CD8-positive, alpha-beta T cell (primary cell): ENCODE measurements at regions of chr12 and their contacts with region 1.

Region 1: GRCh38 chr12:10235761-10236631 is 23.3 kb downstream of the GABARAPL1 start:
- DNase-seq: peak in 8 of 9 experiments; percentile 26 to 80 (median 54)
- ATAC-seq: peak; percentile 78
- H3K4me3 ChIP-seq: no peak overlapping the region
- H3K4me3 Mint-ChIP-seq: no peak overlapping the region
- H3K27ac ChIP-seq: peak overlapping the region in 1 of 2 experiments; percentile 56
- H3K27ac Mint-ChIP-seq: peak overlapping the region; percentile 73
- H3K4me1 ChIP-seq: peaks cover 6% of the 10 kb centered on the region
- H3K4me1 Mint-ChIP-seq: peaks cover 18% of the 10 kb centered on the region
- H3K27me3 ChIP-seq: no peaks in the 10 kb centered on the region
- H3K27me3 Mint-ChIP-seq: no peaks in the 10 kb centered on the region
- CTCF ChIP-seq: peak; percentile 90

Region 2: GRCh38 chr12:8483079-8483478 is 1752.9 kb before region 1 on chr12:
- CTCF ChIA-PET with region 1: no interaction called
- POLR2A ChIA-PET with region 1: no interaction called
- intact Hi-C with region 1: no loop called
- DNase-seq: peak in 3 of 9 experiments; percentile 4 to 27 (median 18)
- ATAC-seq: peak; percentile 58
- H3K4me3 ChIP-seq: no peak overlapping the region
- H3K4me3 Mint-ChIP-seq: no peak overlapping the region
- H3K27ac ChIP-seq: no peak overlapping the region
- H3K27ac Mint-ChIP-seq: peak overlapping the region; percentile 86
- H3K4me1 ChIP-seq: peaks cover 8% of the 10 kb centered on the region
- H3K4me1 Mint-ChIP-seq: peaks cover 14% of the 10 kb centered on the region
- H3K27me3 ChIP-seq: peaks cover 0 to 3% of the 10 kb centered on the region in 2 experiments
- H3K27me3 Mint-ChIP-seq: peaks cover 5% of the 10 kb centered on the region
- CTCF ChIP-seq: no peak

Region 3: GRCh38 chr12:9707864-9708808 is 527.9 kb before region 1 on chr12:
- CTCF ChIA-PET with region 1: no interaction called
- POLR2A ChIA-PET with region 1: no interaction called
- intact Hi-C with region 1: no loop called
- DNase-seq: peak; percentile 47 to 88 (median 73)
- ATAC-seq: peak; percentile 89
- H3K4me3 ChIP-seq: peak overlapping the region; percentile 5 to 21
- H3K4me3 Mint-ChIP-seq: peak overlapping the region; percentile 73
- H3K27ac ChIP-seq: peak overlapping the region; percentile 19 to 75
- H3K27ac Mint-ChIP-seq: peak overlapping the region; percentile 95
- H3K4me1 ChIP-seq: peaks cover 37% of the 10 kb centered on the region
- H3K4me1 Mint-ChIP-seq: peaks cover 62% of the 10 kb centered on the region
- H3K27me3 ChIP-seq: no peaks in the 10 kb centered on the region
- H3K27me3 Mint-ChIP-seq: no peaks in the 10 kb centered on the region
- CTCF ChIP-seq: peak; percentile 70

Region 4: DNA sequence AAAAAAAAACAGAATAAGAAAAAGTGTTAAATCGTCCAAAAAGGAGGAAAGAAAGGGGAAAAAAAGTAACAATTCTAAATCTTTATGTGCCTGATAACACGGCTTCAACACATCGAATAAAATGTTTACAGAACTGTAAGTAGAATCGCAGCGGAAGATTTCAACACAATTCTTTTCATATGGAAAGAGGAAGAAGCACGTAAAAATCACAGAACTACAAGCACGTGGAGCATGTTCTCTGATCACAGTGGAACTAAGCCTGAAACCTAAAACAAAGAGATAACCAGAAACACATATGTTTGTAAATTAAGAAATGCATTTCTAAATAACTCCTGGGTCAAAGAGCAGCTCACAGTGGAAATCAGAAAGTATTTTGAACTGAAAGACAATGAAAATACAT is 114.7 kb before region 1 on chr12:
- CTCF ChIA-PET with region 1: no interaction called
- POLR2A ChIA-PET with region 1: no interaction called
- intact Hi-C with region 1: no loop called
- DNase-seq: no peak
- ATAC-seq: no peak
- H3K4me3 ChIP-seq: no peak overlapping the region
- H3K4me3 Mint-ChIP-seq: no peak overlapping the region
- H3K27ac ChIP-seq: no peak overlapping the region
- H3K27ac Mint-ChIP-seq: no peak overlapping the region
- H3K4me1 ChIP-seq: no peaks in the 10 kb centered on the region
- H3K4me1 Mint-ChIP-seq: no peaks in the 10 kb centered on the region
- H3K27me3 ChIP-seq: no peaks in the 10 kb centered on the region
- H3K27me3 Mint-ChIP-seq: no peaks in the 10 kb centered on the region
- CTCF ChIP-seq: no peak

Region 5: GRCh38 chr12:10320643-10321042 is 84.6 kb after region 1 on chr12:
- CTCF ChIA-PET with region 1: interaction called, 10 read pairs
- POLR2A ChIA-PET with region 1: no interaction called
- intact Hi-C with region 1: no loop called
- DNase-seq: no peak
- ATAC-seq: no peak
- H3K4me3 ChIP-seq: no peak overlapping the region
- H3K4me3 Mint-ChIP-seq: no peak overlapping the region
- H3K27ac ChIP-seq: peak overlapping the region in 1 of 2 experiments; percentile 45
- H3K27ac Mint-ChIP-seq: peak overlapping the region; percentile 2
- H3K4me1 ChIP-seq: no peaks in the 10 kb centered on the region
- H3K4me1 Mint-ChIP-seq: peaks cover 18% of the 10 kb centered on the region
- H3K27me3 ChIP-seq: no peaks in the 10 kb centered on the region
- H3K27me3 Mint-ChIP-seq: no peaks in the 10 kb centered on the region
- CTCF ChIP-seq: no peak

Region 6: DNA sequence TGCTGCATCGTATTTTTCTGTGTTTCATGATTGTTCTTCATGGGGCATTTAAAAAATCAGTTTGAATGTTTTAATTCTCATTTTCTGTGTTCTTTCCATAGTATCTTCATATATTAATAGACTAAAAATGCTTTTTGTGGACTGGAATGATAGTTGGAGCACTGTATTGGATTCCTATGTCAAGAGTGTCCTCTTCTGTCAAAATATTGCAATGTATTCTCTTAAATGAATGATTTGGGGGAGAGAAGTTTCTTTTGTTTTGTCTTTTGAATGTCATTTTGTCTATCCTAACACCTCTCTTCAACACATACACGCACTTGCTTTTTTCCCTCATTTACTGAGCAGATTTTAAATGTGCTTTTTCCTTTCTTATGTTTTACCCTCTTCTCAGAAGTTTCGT is 265.0 kb after region 1 on chr12:
- CTCF ChIA-PET with region 1: interaction called, 25 read pairs
- POLR2A ChIA-PET with region 1: no interaction called
- intact Hi-C with region 1: loop called (anchors 1 to 2 kb)
- DNase-seq: peak in 2 of 9 experiments; percentile 36 to 59
- ATAC-seq: no peak
- H3K4me3 ChIP-seq: no peak overlapping the region
- H3K4me3 Mint-ChIP-seq: peak overlapping the region; percentile 57
- H3K27ac ChIP-seq: no peak overlapping the region
- H3K27ac Mint-ChIP-seq: peak overlapping the region; percentile 82
- H3K4me1 ChIP-seq: peaks cover 56% of the 10 kb centered on the region
- H3K4me1 Mint-ChIP-seq: peaks cover 51% of the 10 kb centered on the region
- H3K27me3 ChIP-seq: no peaks in the 10 kb centered on the region
- H3K27me3 Mint-ChIP-seq: no peaks in the 10 kb centered on the region
- CTCF ChIP-seq: no peak

Region 7: GRCh38 chr12:10613349-10614055 is 377.5 kb after region 1 on chr12 and contains the start of gene MAGOHB:
- CTCF ChIA-PET with region 1: interaction called, 3 read pairs
- POLR2A ChIA-PET with region 1: no interaction called
- intact Hi-C with region 1: loop called in 1 of 2 experiments (anchors 5 kb)
- DNase-seq: peak; percentile 97 to 100 (median 99)
- ATAC-seq: peak; percentile 90
- H3K4me3 ChIP-seq: peak within 1 kb of the TSS; percentile 74 to 97
- H3K4me3 Mint-ChIP-seq: peak within 1 kb of the TSS; percentile 100
- H3K27ac ChIP-seq: peak within 1 kb of the TSS; percentile 91 to 99
- H3K27ac Mint-ChIP-seq: peak within 1 kb of the TSS; percentile 100
- H3K4me1 ChIP-seq: peaks cover 19% of the 10 kb centered on the region
- H3K4me1 Mint-ChIP-seq: peaks cover 33% of the 10 kb centered on the region
- H3K27me3 ChIP-seq: no peaks in the 10 kb centered on the region
- H3K27me3 Mint-ChIP-seq: no peaks in the 10 kb centered on the region
- CTCF ChIP-seq: no peak
- total RNA-seq, gene MAGOHB: 7.9 to 8.5 TPM

Region 8: GRCh38 chr12:10673660-10674384 is 437.8 kb after region 1 on chr12 and contains the start of gene STYK1:
- CTCF ChIA-PET with region 1: interaction called, 27 read pairs
- POLR2A ChIA-PET with region 1: no interaction called
- intact Hi-C with region 1: loop called (anchors 1 kb)
- DNase-seq: peak; percentile 64 to 89 (median 76)
- ATAC-seq: peak; percentile 72
- H3K4me3 ChIP-seq: peak within 1 kb of the TSS; percentile 41 to 57
- H3K4me3 Mint-ChIP-seq: peak within 1 kb of the TSS; percentile 82
- H3K27ac ChIP-seq: peak within 1 kb of the TSS; percentile 50 to 75
- H3K27ac Mint-ChIP-seq: peak within 1 kb of the TSS; percentile 92
- H3K4me1 ChIP-seq: peaks cover 25% of the 10 kb centered on the region
- H3K4me1 Mint-ChIP-seq: peaks cover 43% of the 10 kb centered on the region
- H3K27me3 ChIP-seq: no peaks in the 10 kb centered on the region
- H3K27me3 Mint-ChIP-seq: peaks cover 7% of the 10 kb centered on the region
- CTCF ChIP-seq: peak; percentile 95
- total RNA-seq, gene STYK1: 0.57 to 0.89 TPM

Region 9: DNA sequence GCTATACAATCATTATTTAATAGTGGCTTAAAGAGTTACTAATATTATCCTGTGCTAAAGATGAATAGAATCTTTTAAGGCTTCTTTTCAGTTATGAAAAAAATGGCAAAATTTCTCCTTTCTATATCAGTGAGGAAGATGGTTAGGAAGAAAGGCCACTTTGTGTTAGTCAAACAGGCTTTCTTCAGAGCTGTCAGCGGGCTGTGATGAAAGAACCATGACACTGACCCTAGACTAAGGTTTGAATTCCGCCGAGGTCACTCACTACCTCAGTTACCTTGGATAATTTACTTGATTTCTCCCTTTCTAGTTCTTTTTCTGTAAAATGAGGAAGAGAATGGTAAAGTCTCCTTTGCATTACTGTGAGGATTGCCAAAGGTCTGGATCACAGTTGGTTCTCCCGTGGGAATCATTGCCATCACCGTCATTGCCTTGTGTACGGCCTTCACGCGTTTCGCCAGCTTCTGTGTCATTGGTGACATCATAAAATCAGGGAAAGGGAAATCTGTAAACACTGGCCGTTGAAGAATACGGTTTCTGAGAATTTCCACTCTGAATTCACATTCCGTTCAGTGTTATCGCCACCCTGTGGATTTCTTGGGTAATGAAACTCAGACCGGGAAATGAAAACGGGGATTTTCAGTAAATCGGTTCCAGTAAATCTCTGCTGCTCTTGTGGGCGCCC is 513.8 kb after region 1 on chr12:
- CTCF ChIA-PET with region 1: interaction called, 27 read pairs
- POLR2A ChIA-PET with region 1: interaction called, 3 read pairs
- intact Hi-C with region 1: loop called (anchors 1 kb)
- DNase-seq: peak; percentile 43 to 89 (median 71)
- ATAC-seq: peak; percentile 100
- H3K4me3 ChIP-seq: peak overlapping the region in 1 of 2 experiments; percentile 21
- H3K4me3 Mint-ChIP-seq: peak overlapping the region; percentile 36
- H3K27ac ChIP-seq: no peak overlapping the region
- H3K27ac Mint-ChIP-seq: no peak overlapping the region
- H3K4me1 ChIP-seq: peaks cover 4% of the 10 kb centered on the region
- H3K4me1 Mint-ChIP-seq: peaks cover 6% of the 10 kb centered on the region
- H3K27me3 ChIP-seq: no peaks in the 10 kb centered on the region
- H3K27me3 Mint-ChIP-seq: peaks cover 25% of the 10 kb centered on the region
- CTCF ChIP-seq: peak; percentile 97

Region 10: DNA sequence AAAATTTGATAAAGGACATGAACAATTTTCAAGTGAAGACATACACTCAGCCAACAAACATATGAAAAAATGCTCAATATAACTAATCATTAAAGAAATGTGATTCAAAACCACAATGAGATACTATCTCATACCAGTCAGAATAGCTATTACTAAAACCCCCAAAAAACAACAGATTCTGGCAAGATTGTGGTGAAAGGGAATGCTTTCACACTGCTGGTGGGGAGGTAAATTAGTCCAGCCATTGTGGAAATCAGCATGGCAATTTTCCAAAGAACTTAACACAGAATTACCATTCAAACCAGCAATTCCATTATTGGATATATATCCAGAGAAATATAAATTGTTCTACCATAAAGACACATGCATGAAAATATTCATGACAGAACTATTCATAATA is 721.7 kb after region 1 on chr12:
- CTCF ChIA-PET with region 1: no interaction called
- POLR2A ChIA-PET with region 1: no interaction called
- intact Hi-C with region 1: no loop called
- DNase-seq: no peak
- ATAC-seq: no peak
- H3K4me3 ChIP-seq: no peak overlapping the region
- H3K4me3 Mint-ChIP-seq: no peak overlapping the region
- H3K27ac ChIP-seq: no peak overlapping the region
- H3K27ac Mint-ChIP-seq: no peak overlapping the region
- H3K4me1 ChIP-seq: peaks cover 15% of the 10 kb centered on the region
- H3K4me1 Mint-ChIP-seq: peaks cover 27% of the 10 kb centered on the region
- H3K27me3 ChIP-seq: no peaks in the 10 kb centered on the region
- H3K27me3 Mint-ChIP-seq: no peaks in the 10 kb centered on the region
- CTCF ChIP-seq: no peak

Region 11: DNA sequence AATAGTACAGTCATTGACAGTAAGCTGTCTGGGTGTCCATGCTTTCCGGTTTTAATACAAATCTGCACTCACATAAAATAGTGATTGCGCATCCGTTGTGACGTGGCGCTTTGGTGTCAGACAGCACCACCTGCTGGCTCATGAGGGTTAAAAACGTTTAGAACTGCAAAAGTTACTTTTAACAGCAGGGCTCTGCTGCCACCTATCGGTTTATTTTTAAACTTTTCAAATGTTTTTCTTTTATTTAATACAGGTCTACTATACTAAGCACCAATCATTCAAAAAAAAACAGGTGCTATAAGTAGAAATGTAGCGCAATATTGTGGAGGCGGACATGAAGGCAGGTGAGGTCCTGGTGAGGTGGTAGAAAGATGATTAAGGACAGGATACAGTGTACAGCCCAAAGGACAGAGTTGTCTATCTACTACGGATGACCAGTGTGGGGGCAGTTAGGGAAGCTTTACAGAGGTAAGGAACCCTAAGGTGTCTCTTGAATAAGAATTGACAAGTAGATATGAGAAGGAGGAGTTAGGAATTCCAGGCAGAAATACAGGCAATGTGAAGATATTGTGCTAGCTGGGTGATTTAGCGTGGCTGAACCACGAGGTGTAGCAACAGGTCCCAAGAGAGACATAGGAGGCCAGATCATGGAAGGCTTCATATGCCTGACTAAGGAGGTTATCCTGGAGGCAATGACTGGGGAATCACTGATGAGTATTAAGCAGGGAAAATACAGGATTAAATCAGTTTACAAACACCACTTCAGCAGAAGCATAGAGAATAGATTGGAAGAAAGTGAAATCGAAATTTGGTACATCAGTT is 1250.8 kb after region 1 on chr12:
- CTCF ChIA-PET with region 1: interaction called, 3 read pairs
- POLR2A ChIA-PET with region 1: no interaction called
- intact Hi-C with region 1: loop called (anchors 1 to 5 kb)
- DNase-seq: peak; percentile 55 to 92 (median 79)
- ATAC-seq: peak; percentile 99
- H3K4me3 ChIP-seq: no peak overlapping the region
- H3K4me3 Mint-ChIP-seq: no peak overlapping the region
- H3K27ac ChIP-seq: no peak overlapping the region
- H3K27ac Mint-ChIP-seq: no peak overlapping the region
- H3K4me1 ChIP-seq: no peaks in the 10 kb centered on the region
- H3K4me1 Mint-ChIP-seq: peaks cover 8% of the 10 kb centered on the region
- H3K27me3 ChIP-seq: no peaks in the 10 kb centered on the region
- H3K27me3 Mint-ChIP-seq: no peaks in the 10 kb centered on the region
- CTCF ChIP-seq: peak; percentile 100